ENCODE measurements at regions of chr18 and their contacts with region 1.

Region 1: GRCh38 chr18:23662309-23663263 is at the start of gene ANKRD29:
- DNase-seq: no peak
- ATAC-seq: peak in 1 of 2 donors; percentile 48
- H3K4me3 ChIP-seq: peak within 1 kb of the TSS; percentile 51 to 58 (median 53)
- H3K27ac ChIP-seq: peak within 1 kb of the TSS in 1 of 4 donors; percentile 24
- H3K4me1 ChIP-seq: peaks cover 0 to 7% of the 10 kb centered on the region in 2 donors
- H3K27me3 ChIP-seq: peaks cover 37 to 44% (median 41%) of the 10 kb centered on the region in 3 donors
- CTCF ChIP-seq: no peak
- POLR2A ChIP-seq: no peak
- total RNA-seq, gene ANKRD29: 0.93 to 2.8 (median 1.6) TPM

Region 2: DNA sequence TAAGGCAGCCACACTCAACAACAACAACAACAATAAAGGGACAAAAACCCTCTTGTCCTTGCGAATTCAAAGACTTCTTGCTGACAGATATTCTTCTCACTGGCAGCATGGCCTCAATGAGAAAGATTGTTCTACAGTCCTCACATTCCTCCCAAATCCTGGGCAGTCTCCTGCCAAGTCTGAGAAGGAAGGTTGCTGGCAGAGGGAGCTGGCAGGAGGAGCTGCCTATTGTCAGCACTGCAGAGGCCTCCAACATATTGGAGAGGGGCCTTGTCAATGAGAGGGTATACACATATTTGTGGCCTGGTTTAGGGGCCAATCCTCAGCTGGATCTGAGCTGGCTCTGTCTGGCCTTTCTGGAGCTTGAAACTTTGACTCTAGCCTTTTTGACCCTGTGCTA is 90.2 kb after region 1 on chr18:
- in situ Hi-C with region 1: loop called in 1 of 4 experiments (anchors 25 kb)
- intact Hi-C with region 1: no loop called
- DNase-seq: no peak
- ATAC-seq: no peak
- H3K4me3 ChIP-seq: no peak overlapping the region
- H3K27ac ChIP-seq: no peak overlapping the region
- H3K4me1 ChIP-seq: no peaks in the 10 kb centered on the region
- H3K27me3 ChIP-seq: no peaks in the 10 kb centered on the region
- CTCF ChIP-seq: no peak
- POLR2A ChIP-seq: no peak

Measured in gastrocnemius medialis (tissue), 4 donors.